Dorsolateral prefrontal cortex (tissue), 120 donors: ENCODE measurements at regions of chr2 and their contacts with region 1.

Region 1: DNA sequence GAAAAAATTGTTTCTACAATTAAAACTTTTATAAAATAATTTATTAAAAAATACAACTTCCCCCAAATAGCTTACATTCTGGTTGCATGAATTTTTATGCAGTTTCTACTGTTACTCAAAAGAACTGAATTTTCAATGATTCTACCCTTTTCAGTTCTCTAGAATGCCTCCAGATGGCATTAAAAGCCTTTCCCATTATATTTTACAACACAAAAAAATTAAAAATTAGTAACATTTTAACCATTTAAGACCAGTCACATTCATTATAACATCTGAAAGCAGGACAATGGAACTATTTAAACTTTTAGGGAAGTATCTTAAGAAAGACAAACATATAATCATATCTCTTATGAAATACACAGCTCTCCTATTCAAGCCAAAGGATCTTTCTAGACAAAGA is 236.0 kb upstream of the REV1 start:
- DNase-seq: no peak
- H3K4me3 ChIP-seq: no peak overlapping the region
- H3K27ac ChIP-seq: no peak overlapping the region
- H3K27me3 ChIP-seq: no peaks in the 10 kb centered on the region
- CTCF ChIP-seq: peak in 47 of 56 donors; percentile 16 to 66 (median 33)

Region 2: DNA sequence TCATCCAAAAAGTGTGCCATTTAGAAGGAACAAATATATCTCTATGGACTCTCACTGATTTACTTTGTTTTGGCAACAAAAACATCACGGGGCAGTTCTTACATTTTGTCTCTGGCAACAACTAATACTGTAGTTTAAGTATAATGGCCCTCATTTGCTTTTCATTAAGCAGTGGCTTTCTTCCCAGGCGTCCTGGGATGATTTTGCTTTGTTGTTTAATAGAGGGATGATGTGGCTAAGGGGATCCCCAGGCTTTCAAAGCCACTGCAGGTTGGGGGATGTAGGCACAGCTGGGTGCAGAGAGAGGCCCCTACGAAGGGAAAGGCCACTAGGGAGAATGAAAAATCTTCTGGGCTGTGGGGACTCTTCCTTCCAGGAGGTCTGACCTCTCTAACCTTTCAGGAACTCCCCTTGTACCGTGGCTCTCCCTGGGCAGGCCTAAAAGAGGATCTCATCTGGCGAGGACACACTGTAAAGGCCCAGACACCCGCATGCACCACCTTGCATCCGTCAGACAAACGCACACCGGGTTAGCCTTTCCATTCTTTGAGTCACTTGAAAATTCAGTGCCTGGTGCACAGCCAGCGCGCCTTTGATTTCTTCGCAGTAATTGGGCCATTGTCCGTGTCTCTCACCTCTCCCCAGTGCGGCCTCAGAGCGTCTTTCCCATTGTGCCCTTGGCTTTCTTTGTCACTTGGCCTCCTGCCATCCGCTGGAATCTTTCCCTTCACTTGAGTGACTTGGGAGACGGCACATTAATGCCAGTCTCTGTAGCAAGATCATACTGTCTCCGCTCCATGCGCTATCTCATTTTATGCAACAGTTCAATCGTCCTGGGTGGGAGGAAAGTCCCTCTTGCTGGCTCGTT is 456.9 kb after region 1 on chr2:
- intact Hi-C with region 1: no loop called
- DNase-seq: peak in 1 of 10 donors; percentile 51
- H3K4me3 ChIP-seq: no peak overlapping the region
- H3K27ac ChIP-seq: no peak overlapping the region
- H3K27me3 ChIP-seq: no peaks in the 10 kb centered on the region
- CTCF ChIP-seq: no peak

Region 3: DNA sequence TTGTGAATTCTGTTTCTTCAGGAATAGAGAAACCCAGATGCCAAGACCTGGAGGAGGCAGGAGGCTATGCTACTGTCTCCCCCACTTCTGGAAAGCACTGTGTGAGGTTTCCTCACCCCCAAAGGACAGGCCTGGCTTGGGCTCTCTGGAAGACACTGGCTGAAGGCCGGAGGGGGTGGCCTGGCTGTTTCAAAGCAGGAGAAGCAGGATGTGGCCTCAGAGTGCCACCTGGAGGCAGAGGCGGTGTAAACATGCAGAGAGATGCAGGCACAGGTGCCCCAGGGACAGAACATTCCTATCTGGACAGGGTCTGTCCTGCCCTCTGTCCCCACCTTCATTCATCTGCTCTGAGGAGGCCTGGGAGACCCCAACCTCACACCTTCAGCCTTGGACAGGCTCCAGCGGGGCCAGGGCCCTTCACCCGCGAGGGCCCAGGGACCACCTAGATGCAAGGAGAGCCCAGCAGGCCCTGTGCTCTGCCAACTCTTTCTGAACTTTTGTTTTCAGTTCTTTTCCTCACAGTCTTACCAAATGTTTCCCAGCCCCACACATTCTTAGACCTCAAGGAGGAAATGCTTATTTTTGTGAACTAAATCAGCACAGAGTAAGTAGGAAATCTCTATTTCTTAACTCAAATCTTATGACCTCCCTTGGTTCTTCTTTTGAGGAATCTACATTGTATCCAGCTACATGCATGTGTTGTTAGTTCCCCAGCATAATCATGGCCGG is 517.2 kb after region 1 on chr2:
- intact Hi-C with region 1: loop called (anchors 10 kb)
- DNase-seq: peak in 8 of 10 donors; percentile 31 to 69 (median 58)
- H3K4me3 ChIP-seq: no peak overlapping the region
- H3K27ac ChIP-seq: no peak overlapping the region
- H3K27me3 ChIP-seq: peaks cover 0 to 3% (median 0%) of the 10 kb centered on the region in 45 donors
- CTCF ChIP-seq: peak in 54 of 56 donors; percentile 23 to 78 (median 54)

Region 4: DNA sequence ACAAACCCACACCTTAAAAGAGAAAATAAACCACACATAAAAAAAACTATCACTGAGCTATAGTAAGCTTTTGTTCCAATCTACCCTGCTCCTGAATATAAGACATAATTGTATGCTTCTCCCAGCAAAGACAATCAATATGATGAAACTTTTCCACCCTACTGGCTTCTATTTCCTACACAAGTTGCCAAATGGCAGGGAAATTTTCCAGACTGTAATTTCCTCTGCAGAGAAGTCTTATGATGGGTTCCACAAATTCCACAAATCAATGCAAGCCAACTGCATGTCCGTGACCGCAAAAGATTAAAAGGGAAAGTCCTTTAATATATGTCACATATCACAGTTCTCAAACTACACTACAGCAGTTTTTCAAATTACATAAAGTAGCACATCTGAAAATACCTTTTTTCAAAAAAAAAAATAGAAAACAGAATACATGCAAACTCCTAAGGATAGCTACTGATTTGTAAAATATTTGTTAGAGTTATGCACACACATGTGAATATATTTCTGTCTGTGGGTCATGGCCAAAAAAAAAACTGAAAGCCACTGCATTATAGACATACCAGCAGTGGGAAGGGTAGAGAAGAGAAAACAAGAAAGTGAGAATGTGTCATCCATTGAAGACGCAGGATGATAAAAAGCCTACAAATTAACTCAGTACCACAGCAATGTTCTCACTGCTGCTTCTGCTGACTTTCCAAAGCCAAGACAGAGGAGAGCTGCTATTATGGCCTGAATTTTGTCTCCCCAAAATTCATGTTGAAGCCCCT is 1337.7 kb after region 1 on chr2:
- intact Hi-C with region 1: no loop called
- DNase-seq: no peak
- H3K4me3 ChIP-seq: no peak overlapping the region
- H3K27ac ChIP-seq: no peak overlapping the region
- H3K27me3 ChIP-seq: no peaks in the 10 kb centered on the region
- CTCF ChIP-seq: no peak